ENCODE measurements at regions of chr15 and their contacts with region 1.

Region 1: GRCh38 chr15:98671060-98672008 is 23.0 kb downstream of the IGF1R start:
- DNase-seq: no peak
- ATAC-seq: no peak

Region 2: DNA sequence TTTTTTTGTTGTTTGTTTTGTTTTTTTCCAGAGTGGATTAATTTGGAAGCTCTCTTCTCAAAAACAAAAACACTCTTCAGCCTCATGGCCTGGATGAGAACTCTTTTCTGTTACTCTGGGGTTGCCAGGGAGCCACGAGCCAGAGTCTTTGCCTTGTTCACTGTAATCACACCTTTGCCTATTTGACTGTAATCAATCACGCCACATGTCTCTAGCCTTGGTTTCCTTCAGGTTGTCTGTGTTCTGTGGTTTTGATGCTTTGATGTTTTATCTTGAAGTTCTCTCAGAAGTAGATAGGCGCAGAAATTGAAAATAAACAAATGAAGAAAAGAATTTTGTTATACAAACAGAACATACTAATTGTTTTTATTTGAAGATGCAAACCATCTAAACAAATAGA is 85.3 kb before region 1 on chr15:
- intact Hi-C with region 1: no loop called
- DNase-seq: no peak
- ATAC-seq: no peak

Region 3: DNA sequence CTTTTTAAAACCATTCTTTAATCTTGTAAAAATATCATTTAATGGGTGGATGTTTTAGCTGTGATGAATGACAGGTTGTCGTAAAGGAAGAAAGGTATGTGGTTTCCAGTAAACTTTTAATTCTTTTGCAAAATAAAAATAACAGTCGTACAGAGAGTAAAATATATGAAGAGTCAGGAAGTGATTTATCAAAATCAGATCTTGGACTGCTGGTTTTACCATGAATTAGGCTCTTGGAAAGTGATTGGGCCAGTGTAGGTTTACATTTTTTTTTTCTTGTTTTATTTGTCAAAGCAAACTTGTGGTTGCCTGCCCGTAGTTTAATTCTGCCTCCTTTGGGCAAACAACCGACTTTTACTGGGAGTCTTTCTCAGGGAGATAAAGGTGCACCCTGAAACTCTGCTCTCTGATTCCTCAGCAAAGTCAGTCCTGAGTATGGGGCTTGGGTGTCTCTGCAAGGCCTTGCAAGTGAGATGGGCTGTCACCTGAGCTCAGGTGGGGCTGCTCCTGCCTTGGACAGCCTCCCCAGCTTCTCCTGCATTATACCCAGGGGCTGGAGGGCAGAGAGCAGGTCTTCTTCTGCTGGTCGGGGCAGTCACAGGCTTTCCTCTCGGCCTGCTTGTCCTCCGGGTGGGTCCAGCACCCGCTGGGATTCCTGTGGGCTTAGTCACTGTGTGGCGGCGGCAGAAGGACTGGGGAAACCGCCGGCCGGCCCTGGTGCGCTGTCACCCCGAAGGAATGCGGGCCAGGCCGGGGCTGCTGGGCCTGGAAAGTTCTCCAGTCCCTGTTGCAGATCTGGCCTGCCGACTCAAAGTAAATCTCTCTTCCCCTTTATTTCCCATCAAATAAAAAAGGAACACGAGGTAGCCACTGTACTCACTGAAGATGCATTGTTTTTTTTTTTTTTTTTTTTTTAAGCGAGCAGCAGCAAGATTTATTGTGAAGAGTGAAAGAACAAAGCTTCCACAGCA is 56.1 kb after region 1 on chr15:
- intact Hi-C with region 1: loop called (anchors 5 kb)
- DNase-seq: peak; percentile 88
- ATAC-seq: peak; percentile 92

Measured in Right ventricle myocardium inferior (tissue), 1 donor.